MCF 10A (cell line): ENCODE measurements at regions of chr6 and their contacts with region 1.

Region 1: DNA sequence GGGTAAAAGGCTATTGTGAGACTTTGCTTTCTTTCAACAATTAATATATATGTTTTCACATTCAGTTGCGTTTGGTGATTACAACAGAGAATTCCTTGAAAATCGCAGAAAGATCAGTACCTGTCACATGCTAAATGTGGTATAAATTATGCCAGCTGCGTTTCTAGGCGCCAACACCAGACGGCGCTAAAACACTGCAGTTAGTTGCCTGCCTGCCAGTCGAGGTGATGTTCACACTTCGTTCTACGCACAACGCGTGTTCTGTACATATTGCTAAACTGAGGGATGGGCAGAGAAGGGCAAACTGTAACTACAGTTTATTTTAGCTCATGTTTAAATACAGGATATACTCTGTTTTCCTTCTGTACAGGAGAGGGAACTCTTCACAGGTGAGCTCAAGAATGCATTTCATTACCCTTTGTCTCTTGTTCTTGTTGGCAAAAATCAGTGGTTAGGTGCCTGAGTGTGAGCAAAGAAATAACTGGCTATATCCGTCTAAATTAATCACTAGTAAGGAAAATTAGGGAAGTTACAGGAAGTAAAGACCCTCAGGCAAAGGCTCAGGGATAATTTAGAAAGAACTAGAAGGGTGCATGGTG is 100.1 kb upstream of the RGS17 start:
- DNase-seq: peak; percentile 74
- H3K4me3 Mint-ChIP-seq: no peak overlapping the region
- H3K27ac Mint-ChIP-seq: no peak overlapping the region
- H3K4me1 Mint-ChIP-seq: peaks cover 4% of the 10 kb centered on the region
- H3K27me3 Mint-ChIP-seq: no peaks in the 10 kb centered on the region
- CTCF ChIP-seq: peak; percentile 92

Region 2: DNA sequence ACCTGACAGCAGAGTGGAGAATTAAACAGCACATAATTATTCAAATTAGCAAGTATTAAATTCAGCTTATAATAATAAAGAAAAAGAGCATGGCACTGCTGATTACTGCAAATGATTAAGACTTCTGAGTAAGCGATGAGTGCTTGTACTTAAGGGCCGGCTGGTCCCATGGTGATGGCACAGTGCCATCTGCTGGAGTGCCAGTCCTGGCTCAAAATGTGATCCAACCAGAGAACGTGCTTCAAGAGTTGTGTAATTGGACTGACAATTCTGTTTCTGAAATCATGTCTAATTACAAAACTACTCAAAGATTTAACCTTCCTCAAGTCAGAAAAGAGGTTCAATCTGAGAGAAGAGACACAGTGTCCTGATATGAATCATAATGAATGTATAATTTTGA is 81.5 kb after region 1 on chr6:
- CTCF ChIA-PET with region 1: interaction called, 16 read pairs
- POLR2A ChIA-PET with region 1: no interaction called
- intact Hi-C with region 1: loop called (anchors 1 kb)
- DNase-seq: peak; percentile 87
- H3K4me3 Mint-ChIP-seq: no peak overlapping the region
- H3K27ac Mint-ChIP-seq: no peak overlapping the region
- H3K4me1 Mint-ChIP-seq: no peaks in the 10 kb centered on the region
- H3K27me3 Mint-ChIP-seq: no peaks in the 10 kb centered on the region
- CTCF ChIP-seq: peak; percentile 28

Region 3: DNA sequence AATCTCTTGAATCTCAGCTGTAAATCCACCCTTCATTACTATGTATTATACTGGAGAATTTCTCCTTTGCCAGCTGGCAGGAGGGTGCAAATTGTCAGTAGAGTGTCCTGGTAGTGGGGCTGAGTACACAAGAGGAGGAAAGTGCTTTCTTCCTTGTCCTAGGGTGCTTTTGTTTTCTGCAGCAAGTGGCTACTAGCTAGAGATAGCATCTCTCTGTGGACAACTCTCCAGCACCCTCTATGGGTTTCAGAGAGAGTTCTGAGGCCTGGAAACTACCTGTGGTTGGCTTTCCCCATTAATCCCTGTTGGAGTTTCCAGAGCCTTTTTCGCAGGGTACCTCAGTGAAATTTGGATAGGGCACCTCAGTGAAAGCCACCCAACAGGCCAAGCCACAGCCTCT is 322.5 kb after region 1 on chr6:
- CTCF ChIA-PET with region 1: interaction called, 10 read pairs
- POLR2A ChIA-PET with region 1: interaction called, 4 read pairs
- intact Hi-C with region 1: loop called (anchors 1 kb)
- DNase-seq: peak; percentile 56
- H3K4me3 Mint-ChIP-seq: no peak overlapping the region
- H3K27ac Mint-ChIP-seq: no peak overlapping the region
- H3K4me1 Mint-ChIP-seq: no peaks in the 10 kb centered on the region
- H3K27me3 Mint-ChIP-seq: no peaks in the 10 kb centered on the region
- CTCF ChIP-seq: peak; percentile 48

Region 4: DNA sequence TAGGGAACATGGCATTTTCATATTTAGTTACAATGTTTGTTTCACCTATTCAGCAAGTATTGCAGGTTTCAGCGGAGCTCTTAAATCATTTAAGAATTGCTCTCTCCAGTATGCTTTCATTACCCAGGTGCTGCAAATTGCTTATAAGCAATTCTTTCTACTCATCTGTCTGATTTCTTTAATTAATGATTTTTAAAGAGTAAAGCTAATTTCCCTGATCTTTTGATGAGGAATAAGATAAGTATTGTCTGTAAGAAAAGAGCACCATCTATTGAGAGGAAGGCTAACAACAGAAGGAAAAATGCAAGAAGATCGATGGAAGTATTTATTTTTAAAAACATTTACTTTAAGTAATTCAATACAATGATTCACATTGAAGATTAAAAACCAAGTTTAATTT is 809.9 kb after region 1 on chr6:
- CTCF ChIA-PET with region 1: interaction called, 6 read pairs
- POLR2A ChIA-PET with region 1: no interaction called
- intact Hi-C with region 1: loop called (anchors 1 kb)
- DNase-seq: no peak
- H3K4me3 Mint-ChIP-seq: no peak overlapping the region
- H3K27ac Mint-ChIP-seq: no peak overlapping the region
- H3K4me1 Mint-ChIP-seq: peaks cover 5% of the 10 kb centered on the region
- H3K27me3 Mint-ChIP-seq: no peaks in the 10 kb centered on the region
- CTCF ChIP-seq: peak; percentile 21

Region 5: DNA sequence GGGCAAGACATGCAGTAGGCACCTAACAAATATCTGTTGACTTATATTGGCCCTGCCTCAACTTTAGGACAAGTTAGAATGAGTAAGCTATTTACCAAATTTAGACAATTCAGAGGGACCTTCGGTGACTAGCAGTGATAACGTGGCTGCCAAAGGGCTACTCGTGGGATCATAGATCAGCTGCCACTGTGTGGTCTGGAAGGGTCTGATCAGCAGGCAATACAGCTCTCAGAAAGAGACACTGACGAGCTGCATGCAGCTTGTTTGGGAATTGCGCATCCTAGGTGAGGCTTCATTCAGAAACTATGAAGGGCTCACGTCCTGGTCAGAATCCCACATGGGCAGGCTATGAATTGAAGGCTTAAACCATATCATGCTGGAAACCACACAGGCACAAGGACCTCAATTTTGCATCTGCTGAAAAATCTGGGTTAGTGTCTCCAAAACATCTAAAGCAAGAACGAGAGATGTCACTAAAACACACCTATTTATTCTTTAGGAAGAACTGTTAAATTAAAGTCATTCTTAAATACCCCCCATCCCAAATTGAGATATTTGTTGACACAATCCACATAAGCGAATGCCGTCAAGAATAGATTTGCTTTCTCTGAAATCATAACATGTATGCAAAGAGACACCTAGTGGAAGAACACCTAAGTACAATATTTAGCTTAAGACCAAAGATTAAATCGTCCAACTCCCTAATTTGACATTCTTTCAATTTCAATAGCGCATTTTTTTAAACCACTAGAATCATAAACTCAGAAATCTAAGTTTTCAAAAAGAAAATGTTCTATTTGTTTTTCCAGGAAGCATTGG is 1045.9 kb after region 1 on chr6:
- CTCF ChIA-PET with region 1: no interaction called
- POLR2A ChIA-PET with region 1: no interaction called
- intact Hi-C with region 1: loop called (anchors 5 kb)
- DNase-seq: peak; percentile 56
- H3K4me3 Mint-ChIP-seq: peak overlapping the region; percentile 44
- H3K27ac Mint-ChIP-seq: no peak overlapping the region
- H3K4me1 Mint-ChIP-seq: peaks cover 6% of the 10 kb centered on the region
- H3K27me3 Mint-ChIP-seq: no peaks in the 10 kb centered on the region
- CTCF ChIP-seq: peak; percentile 40